Panc1 (cell line): ENCODE measurements at regions of chr2 and their contacts with region 1.

Region 1: DNA sequence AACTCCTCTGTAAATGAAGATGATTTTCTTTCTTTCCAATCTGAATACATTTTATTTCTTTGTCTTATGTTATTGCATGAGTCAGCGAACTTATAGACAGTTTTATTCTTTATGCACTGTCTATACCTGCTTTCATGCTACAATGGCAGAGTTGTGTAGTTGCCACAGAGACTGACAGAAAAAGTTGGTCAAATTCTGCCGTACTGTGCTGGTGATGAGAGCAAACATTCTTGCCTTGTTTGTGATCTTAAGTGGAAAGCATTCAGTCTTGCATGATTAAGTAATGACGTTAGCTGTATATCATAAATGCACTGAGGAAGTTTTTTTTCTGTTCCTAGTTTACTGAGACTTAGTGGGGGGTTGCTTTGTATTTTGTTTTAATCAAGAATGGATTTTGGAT is 32.9 kb downstream of the ZC3H15 start:
- DNase-seq: no peak
- ATAC-seq: no peak
- H3K4me3 ChIP-seq: no peak overlapping the region
- H3K27ac ChIP-seq: no peak overlapping the region
- H3K4me1 ChIP-seq: no peaks in the 10 kb centered on the region; the same call in 1 of the 2 replicates
- H3K27me3 ChIP-seq: no peaks in the 10 kb centered on the region
- CTCF ChIP-seq: no peak

Region 2: DNA sequence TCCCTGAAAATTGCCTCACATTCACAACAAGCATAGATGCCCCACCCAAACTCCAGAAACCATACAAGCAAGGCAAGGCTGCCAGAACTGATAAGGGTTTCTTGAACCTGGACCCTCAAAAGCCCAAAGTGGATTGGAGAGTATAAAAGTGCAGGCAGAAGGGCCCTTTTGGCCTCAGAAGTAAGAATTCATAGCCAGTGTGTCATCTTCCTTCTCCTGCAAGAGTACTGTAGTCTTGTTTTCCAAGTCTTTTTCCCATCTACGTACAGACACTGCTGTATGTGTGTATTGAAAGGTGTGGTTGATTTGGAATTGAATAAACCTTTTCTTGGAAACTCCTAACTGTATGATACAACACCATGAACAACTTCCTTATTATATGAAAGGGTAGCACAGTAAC is 13.9 kb after region 1 on chr2:
- CTCF ChIA-PET with region 1: no interaction called
- POLR2A ChIA-PET with region 1: no interaction called
- in situ Hi-C with region 1: no loop called
- intact Hi-C with region 1: no loop called
- DNase-seq: no peak
- ATAC-seq: no peak
- H3K4me3 ChIP-seq: no peak overlapping the region
- H3K27ac ChIP-seq: no peak overlapping the region
- H3K4me1 ChIP-seq: no peaks in the 10 kb centered on the region
- H3K27me3 ChIP-seq: no peaks in the 10 kb centered on the region
- CTCF ChIP-seq: no peak

Region 3: GRCh38 chr2:186589612-186590349 is 70.8 kb after region 1 on chr2 and contains the start of gene ITGAV:
- CTCF ChIA-PET with region 1: no interaction called
- POLR2A ChIA-PET with region 1: no interaction called
- in situ Hi-C with region 1: no loop called
- intact Hi-C with region 1: loop called (anchors 5 kb)
- DNase-seq: no peak
- ATAC-seq: peak; percentile 97
- H3K4me3 ChIP-seq: peak within 1 kb of the TSS; percentile 92 to 98
- H3K27ac ChIP-seq: peak within 1 kb of the TSS; percentile 99
- H3K4me1 ChIP-seq: peaks cover 33% of the 10 kb centered on the region
- H3K27me3 ChIP-seq: no peaks in the 10 kb centered on the region
- CTCF ChIP-seq: no peak
- total RNA-seq, gene ITGAV: 218 TPM

Region 4: DNA sequence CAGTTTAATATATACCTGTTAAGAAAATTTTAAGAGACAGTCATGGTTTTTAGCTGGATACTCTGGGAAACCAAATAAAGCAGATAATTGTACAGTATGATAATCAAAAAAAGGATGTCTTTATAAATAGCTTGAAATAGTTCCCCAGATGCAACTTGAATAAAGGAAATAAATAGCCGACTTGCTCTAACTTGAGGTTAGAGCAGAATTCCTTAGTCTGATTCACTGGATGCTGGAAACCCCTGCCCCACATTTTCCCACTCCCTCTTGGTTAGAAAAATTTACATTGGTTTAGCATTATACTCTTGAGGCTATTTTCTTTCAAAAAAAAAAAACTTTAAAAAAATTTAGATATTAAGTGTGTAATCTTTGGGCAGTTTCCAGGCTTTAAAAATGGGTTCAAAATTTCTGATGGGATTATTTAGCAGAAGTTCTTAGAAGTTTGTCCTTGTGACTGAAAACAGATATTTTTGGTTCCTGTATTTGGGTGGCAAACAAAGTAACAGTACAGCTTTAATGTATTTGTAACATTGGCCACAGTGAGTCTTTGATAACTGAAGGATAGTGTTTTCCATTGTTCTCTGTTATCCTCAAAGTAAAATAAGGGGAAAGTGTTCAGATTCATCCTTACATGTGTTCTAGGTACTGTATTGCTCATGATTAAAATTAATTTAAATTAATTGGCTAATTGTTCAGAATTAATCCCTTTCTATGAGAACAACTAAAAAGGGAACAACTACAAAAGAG is 110.5 kb after region 1 on chr2:
- CTCF ChIA-PET with region 1: no interaction called
- POLR2A ChIA-PET with region 1: interaction called, 12 read pairs
- in situ Hi-C with region 1: no loop called
- intact Hi-C with region 1: no loop called
- DNase-seq: no peak
- ATAC-seq: no peak
- H3K4me3 ChIP-seq: no peak overlapping the region
- H3K27ac ChIP-seq: no peak overlapping the region
- H3K4me1 ChIP-seq: no peaks in the 10 kb centered on the region; the same call in 1 of the 2 replicates
- H3K27me3 ChIP-seq: no peaks in the 10 kb centered on the region
- CTCF ChIP-seq: no peak